GM12878 (cell line): ENCODE measurements at regions of chr3 and their contacts with region 1.

Region 1: GRCh38 chr3:122092460-122093165 is 37.5 kb downstream of the CD86 start:
- DNase-seq: no peak
- ATAC-seq: peak; percentile 80
- H3K4me3 ChIP-seq: no peak overlapping the region; the same call in 1 of the 2 replicates
- H3K27ac ChIP-seq: peak overlapping the region; percentile 59
- H3K4me1 ChIP-seq: peaks cover 59% of the 10 kb centered on the region
- H3K27me3 ChIP-seq: no peaks in the 10 kb centered on the region
- CTCF ChIP-seq: peak; percentile 60 to 84 (median 80)
- EP300 ChIP-seq: no peak
- POLR2A ChIP-seq: no peak
- RAD21 ChIP-seq: peak; percentile 76

Region 2: DNA sequence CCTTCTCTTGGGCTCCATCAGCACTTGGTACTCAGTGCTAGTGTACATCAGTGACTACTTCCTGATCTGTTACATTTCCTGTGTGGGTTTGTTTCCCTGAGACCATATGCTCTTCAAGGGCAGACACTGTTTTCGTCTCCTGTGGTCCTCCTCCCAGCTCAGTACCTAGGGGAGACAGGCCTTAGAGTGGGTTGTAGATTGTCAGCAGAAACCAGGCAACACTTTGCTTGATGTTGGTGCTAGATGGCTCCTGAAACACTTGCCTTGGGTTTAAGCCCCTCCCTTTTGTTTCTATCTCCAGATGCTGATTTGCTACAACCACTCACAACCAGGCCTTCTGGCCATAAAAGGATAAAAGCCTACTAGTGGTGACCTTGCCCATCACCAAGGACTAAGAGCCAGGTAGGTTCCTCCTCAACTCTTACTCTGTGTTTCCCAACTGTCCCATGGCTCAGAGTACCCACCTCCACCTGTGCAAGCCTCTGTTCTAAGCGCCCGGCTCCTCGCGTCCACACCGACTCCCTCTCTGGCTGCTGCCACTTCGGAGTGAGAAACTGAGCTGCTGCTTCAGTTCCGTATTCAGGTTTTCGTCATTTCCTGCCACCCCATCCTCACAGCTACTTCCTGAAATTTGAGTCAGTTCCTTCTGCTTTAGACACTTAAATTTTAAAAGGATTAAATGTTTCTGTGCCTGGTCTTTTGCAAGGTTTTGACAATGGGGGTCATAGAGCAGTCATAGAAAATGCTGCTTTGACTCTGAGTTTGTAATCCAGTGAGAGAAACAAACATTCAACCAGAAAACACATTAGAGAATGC is 432.0 kb before region 1 on chr3 and contains the start of gene HCLS1:
- CTCF ChIA-PET with region 1: no interaction called
- POLR2A ChIA-PET with region 1: no interaction called
- RAD21 ChIA-PET with region 1: no interaction called
- SMC1A ChIA-PET with region 1: no interaction called
- in situ Hi-C with region 1: no loop called
- intact Hi-C with region 1: loop called (anchors 10 kb)
- DNase-seq: peak; percentile 83
- ATAC-seq: peak; percentile 91
- H3K4me3 ChIP-seq: peak within 1 kb of the TSS; percentile 61
- H3K27ac ChIP-seq: peak within 1 kb of the TSS; percentile 97
- H3K4me1 ChIP-seq: peaks cover 26% of the 10 kb centered on the region
- H3K27me3 ChIP-seq: no peaks in the 10 kb centered on the region
- CTCF ChIP-seq: no peak
- EP300 ChIP-seq: 0 out of 4 replicates have a peak, but pooled peaks of 1 of the 2 experiments have one; percentile 25
- POLR2A ChIP-seq: peak; percentile 99
- RAD21 ChIP-seq: no peak
- polyA plus RNA-seq, gene HCLS1: 51.6 to 76.2 TPM

Region 3: GRCh38 chr3:122014741-122015140 is 77.9 kb before region 1 on chr3:
- CTCF ChIA-PET with region 1: interaction called, 16 read pairs
- POLR2A ChIA-PET with region 1: interaction called, 13 read pairs
- RAD21 ChIA-PET with region 1: interaction called, 70 read pairs
- SMC1A ChIA-PET with region 1: interaction called, 882 read pairs
- in situ Hi-C with region 1: no loop called
- intact Hi-C with region 1: no loop called
- DNase-seq: peak; percentile 91
- ATAC-seq: peak; percentile 80
- H3K4me3 ChIP-seq: peak overlapping the region; percentile 18; the same call in 1 of the 2 replicates
- H3K27ac ChIP-seq: peak overlapping the region; percentile 60
- H3K4me1 ChIP-seq: peaks cover 72% of the 10 kb centered on the region
- H3K27me3 ChIP-seq: no peaks in the 10 kb centered on the region
- CTCF ChIP-seq: no peak
- EP300 ChIP-seq: peak; percentile 81 to 86; a peak in 3 of 4 replicates
- POLR2A ChIP-seq: no peak
- RAD21 ChIP-seq: no peak

Region 4: GRCh38 chr3:122030381-122031122 is 62.1 kb before region 1 on chr3:
- CTCF ChIA-PET with region 1: interaction called, 8 read pairs
- POLR2A ChIA-PET with region 1: interaction called, 3 read pairs
- RAD21 ChIA-PET with region 1: interaction called, 16 read pairs
- SMC1A ChIA-PET with region 1: interaction called, 54 read pairs
- in situ Hi-C with region 1: no loop called
- intact Hi-C with region 1: no loop called
- DNase-seq: peak; percentile 74
- ATAC-seq: peak; percentile 86
- H3K4me3 ChIP-seq: peak overlapping the region; percentile 41; the same call in 1 of the 2 replicates
- H3K27ac ChIP-seq: peak overlapping the region; percentile 89
- H3K4me1 ChIP-seq: peaks cover 37% of the 10 kb centered on the region
- H3K27me3 ChIP-seq: no peaks in the 10 kb centered on the region
- CTCF ChIP-seq: no peak
- EP300 ChIP-seq: no peak
- POLR2A ChIP-seq: 0 out of 2 replicates have a peak, but pooled peaks have one; percentile 25
- RAD21 ChIP-seq: peak; percentile 11; the same call in 1 of the 2 replicates

Region 5: GRCh38 chr3:122067214-122067550 is 25.4 kb before region 1 on chr3:
- CTCF ChIA-PET with region 1: interaction called, 9 read pairs
- POLR2A ChIA-PET with region 1: interaction called, 11 read pairs
- RAD21 ChIA-PET with region 1: interaction called, 29 read pairs
- SMC1A ChIA-PET with region 1: interaction called, 394 read pairs
- in situ Hi-C with region 1: no loop called
- intact Hi-C with region 1: no loop called
- DNase-seq: no peak
- ATAC-seq: peak; percentile 66
- H3K4me3 ChIP-seq: peak overlapping the region; percentile 52; the same call in 1 of the 2 replicates
- H3K27ac ChIP-seq: peak overlapping the region; percentile 66
- H3K4me1 ChIP-seq: peaks cover 57% of the 10 kb centered on the region
- H3K27me3 ChIP-seq: no peaks in the 10 kb centered on the region
- CTCF ChIP-seq: no peak
- EP300 ChIP-seq: 0 out of 4 replicates have a peak, but pooled peaks have one; percentile 20 to 29
- POLR2A ChIP-seq: no peak
- RAD21 ChIP-seq: no peak

Region 6: DNA sequence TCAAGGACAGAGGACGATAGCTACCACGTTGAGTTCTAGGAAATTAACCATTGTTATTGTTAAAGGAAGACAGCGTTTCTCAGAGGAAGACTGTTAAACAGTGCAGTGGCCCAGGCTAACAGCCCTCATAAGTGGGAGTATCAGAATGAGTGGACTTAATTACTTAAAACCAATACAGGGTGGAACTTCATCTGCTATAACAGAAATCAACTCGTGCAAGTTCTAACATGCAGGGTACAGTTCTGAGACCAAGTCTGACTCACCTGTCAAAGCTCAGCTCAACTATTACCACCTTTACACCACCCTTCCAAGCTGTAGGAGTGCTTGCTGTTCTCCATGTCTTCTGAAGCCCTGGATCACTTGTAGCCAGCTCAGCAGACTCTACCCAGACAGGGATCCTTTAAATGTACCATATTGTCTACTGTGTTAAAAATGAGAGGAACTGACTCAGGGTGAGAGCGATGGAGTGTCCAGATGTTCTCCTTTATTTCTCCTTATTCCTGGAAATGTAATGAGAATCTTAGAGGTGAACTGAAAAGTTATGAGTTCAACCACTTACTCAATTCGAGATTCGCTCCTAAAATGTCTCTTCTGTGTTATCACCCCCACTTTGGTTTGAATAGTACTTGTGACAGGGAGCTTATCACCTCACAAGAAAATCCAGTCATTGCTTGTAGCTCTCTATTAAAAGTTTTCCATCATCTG is 10.9 kb before region 1 on chr3:
- CTCF ChIA-PET with region 1: interaction called, 114 read pairs
- POLR2A ChIA-PET with region 1: interaction called, 165 read pairs
- RAD21 ChIA-PET with region 1: interaction called, 426 read pairs
- SMC1A ChIA-PET with region 1: interaction called, 604 read pairs
- in situ Hi-C with region 1: no loop called
- intact Hi-C with region 1: loop called (anchors 2 kb)
- DNase-seq: no peak
- ATAC-seq: peak; percentile 57
- H3K4me3 ChIP-seq: peak overlapping the region; percentile 86; the same call in 1 of the 2 replicates
- H3K27ac ChIP-seq: peak overlapping the region; percentile 97
- H3K4me1 ChIP-seq: peaks cover 62% of the 10 kb centered on the region
- H3K27me3 ChIP-seq: no peaks in the 10 kb centered on the region
- CTCF ChIP-seq: no peak
- EP300 ChIP-seq: peak; percentile 62 to 89; a peak in 3 of 4 replicates
- POLR2A ChIP-seq: no peak
- RAD21 ChIP-seq: 0 out of 2 replicates have a peak, but pooled peaks have one; percentile 12